ENCODE measurements at regions of chr7 and their contacts with region 1.

Region 1: GRCh38 chr7:73522105-73522872 is at the start of gene BAZ1B:
- DNase-seq: peak; percentile 98
- H3K4me3 ChIP-seq: peak within 1 kb of the TSS; percentile 83 to 91 (median 89)
- H3K27ac ChIP-seq: peak within 1 kb of the TSS; percentile 65
- H3K4me1 ChIP-seq: peaks cover 27% of the 10 kb centered on the region
- H3K27me3 ChIP-seq: no peaks in the 10 kb centered on the region
- CTCF ChIP-seq: no peak
- POLR2A ChIP-seq: no peak
- total RNA-seq, gene BAZ1B: 72.6 and 74.7 TPM in 2 replicates

Region 2: GRCh38 chr7:73557108-73557396 is 34.8 kb after region 1 on chr7:
- CTCF ChIA-PET with region 1: no interaction called
- POLR2A ChIA-PET with region 1: interaction called, 5 read pairs
- dilution Hi-C with region 1: no loop called
- intact Hi-C with region 1: loop called (anchors 1 kb)
- DNase-seq: peak; percentile 96
- H3K4me3 ChIP-seq: peak overlapping the region; percentile 69 to 90 (median 82)
- H3K27ac ChIP-seq: peak overlapping the region; percentile 99
- H3K4me1 ChIP-seq: peaks cover 18% of the 10 kb centered on the region
- H3K27me3 ChIP-seq: no peaks in the 10 kb centered on the region
- CTCF ChIP-seq: no peak
- POLR2A ChIP-seq: no peak

Region 3: GRCh38 chr7:73578342-73579127 is 56.2 kb after region 1 on chr7 and contains the start of gene TBL2:
- CTCF ChIA-PET with region 1: no interaction called
- POLR2A ChIA-PET with region 1: no interaction called
- dilution Hi-C with region 1: no loop called
- intact Hi-C with region 1: loop called (anchors 1 kb)
- DNase-seq: peak; percentile 99
- H3K4me3 ChIP-seq: peak within 1 kb of the TSS; percentile 74 to 95 (median 87)
- H3K27ac ChIP-seq: peak within 1 kb of the TSS; percentile 72
- H3K4me1 ChIP-seq: peaks cover 20% of the 10 kb centered on the region
- H3K27me3 ChIP-seq: no peaks in the 10 kb centered on the region
- CTCF ChIP-seq: peak in 1 of 2 donors; percentile 25
- POLR2A ChIP-seq: peak; percentile 97
- total RNA-seq, gene TBL2: 34.8 and 38.6 TPM in 2 replicates

Region 4: GRCh38 chr7:73585196-73585595 is 62.9 kb after region 1 on chr7:
- CTCF ChIA-PET with region 1: no interaction called
- POLR2A ChIA-PET with region 1: no interaction called
- dilution Hi-C with region 1: no loop called
- intact Hi-C with region 1: loop called (anchors 1 kb)
- DNase-seq: no peak
- H3K4me3 ChIP-seq: no peak overlapping the region
- H3K27ac ChIP-seq: no peak overlapping the region
- H3K4me1 ChIP-seq: peaks cover 12% of the 10 kb centered on the region
- H3K27me3 ChIP-seq: no peaks in the 10 kb centered on the region
- CTCF ChIP-seq: no peak
- POLR2A ChIP-seq: no peak

Region 5: DNA sequence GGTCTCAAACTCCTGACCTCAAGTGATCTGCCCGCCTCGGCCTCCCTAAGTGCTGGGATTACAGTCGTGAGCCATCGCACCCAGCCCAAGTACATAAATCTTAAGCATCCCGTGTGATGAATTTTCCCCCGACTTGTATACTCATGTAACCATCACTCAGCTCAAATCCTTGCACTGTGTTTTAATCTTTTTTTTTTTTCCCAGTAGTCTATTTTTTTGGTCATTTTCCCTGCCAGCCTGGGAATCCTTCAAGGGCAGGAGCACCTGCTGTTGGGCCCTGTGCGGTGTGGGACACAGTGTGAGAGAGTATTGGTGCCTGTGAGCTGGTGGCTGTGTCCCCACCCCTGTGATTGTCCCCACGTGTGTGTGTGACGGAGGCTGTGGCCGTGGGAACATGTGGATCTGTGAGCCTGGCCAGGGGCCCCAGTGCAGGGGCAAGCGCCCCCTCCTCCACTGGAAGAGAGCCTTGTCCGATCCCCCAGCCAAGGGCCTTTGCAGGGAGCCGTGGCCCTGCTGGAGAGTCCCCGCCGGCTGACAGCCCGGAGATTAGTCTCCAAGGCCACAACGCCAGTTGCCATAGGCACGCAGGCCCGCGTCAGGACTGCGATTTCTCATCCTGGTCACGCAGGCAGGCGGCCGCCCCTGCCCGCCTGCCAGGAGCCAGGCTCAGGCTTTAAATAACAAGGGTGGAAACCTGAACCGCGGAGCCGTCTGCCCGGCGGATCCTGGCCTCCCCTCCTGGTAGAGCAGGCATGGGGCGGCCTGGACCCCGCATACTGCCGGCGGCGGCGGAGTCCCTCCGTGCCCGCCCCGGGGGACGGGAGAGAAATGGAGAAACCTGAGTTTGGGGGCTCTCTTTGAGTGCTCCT is 957.9 kb after region 1 on chr7:
- CTCF ChIA-PET with region 1: no interaction called
- POLR2A ChIA-PET with region 1: no interaction called
- dilution Hi-C with region 1: no loop called
- intact Hi-C with region 1: no loop called
- DNase-seq: peak; percentile 82
- H3K4me3 ChIP-seq: peak overlapping the region; percentile 11 to 47 (median 20)
- H3K27ac ChIP-seq: peak overlapping the region; percentile 92
- H3K4me1 ChIP-seq: peaks cover 33% of the 10 kb centered on the region
- H3K27me3 ChIP-seq: no peaks in the 10 kb centered on the region
- CTCF ChIP-seq: no peak
- POLR2A ChIP-seq: no peak